ENCODE measurements at regions of chr1 and their contacts with region 1.

Region 1: DNA sequence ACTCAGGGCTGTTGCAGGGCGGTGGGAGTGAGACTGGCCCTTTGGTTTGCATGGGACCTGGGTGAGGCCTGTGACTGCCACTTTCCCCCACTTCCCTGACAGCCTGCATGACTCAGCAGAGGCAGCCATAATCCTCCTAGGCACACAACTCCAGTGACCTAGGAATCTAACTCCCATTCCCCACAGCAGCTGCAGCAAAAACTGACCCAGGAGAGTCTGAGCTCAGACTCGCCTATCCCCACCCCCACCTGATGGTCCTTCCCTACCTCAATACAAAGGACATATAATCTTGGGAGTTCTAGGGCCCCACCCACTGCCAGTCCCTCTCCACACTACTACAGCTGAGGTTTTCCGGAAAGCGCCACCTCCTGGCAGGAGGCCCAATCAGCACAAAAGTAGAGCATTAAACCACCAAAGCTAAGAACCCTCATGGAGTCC is 26.7 kb downstream of the NDC1 start:
- DNase-seq: no peak
- ATAC-seq: no peak
- H3K4me3 ChIP-seq: no peak overlapping the region
- H3K27ac ChIP-seq: no peak overlapping the region
- H3K4me1 ChIP-seq: peaks cover 6% of the 10 kb centered on the region; the same call in 1 of the 2 replicates
- H3K27me3 ChIP-seq: no peaks in the 10 kb centered on the region
- CTCF ChIP-seq: no peak
- POLR2A ChIP-seq: no peak
- RAD21 ChIP-seq: no peak

Region 2: DNA sequence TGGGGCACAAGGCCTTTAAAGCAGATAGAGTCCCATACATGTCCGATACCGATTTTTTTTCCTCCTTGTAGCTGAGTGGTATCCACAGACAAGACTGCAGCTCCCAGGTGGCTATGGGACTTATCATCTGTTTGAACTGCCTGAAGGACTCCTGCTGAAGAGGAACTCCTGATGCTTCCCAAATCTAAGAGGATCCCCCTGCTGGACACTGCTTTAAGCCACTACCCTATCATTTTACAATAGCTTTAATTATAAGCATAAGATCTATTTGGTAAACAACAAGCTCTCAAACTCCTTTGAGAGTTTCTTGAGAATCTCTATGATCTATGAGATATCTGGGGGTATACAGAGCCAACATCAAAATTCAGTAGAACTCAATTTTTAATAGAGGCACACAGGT is 14.9 kb after region 1 on chr1:
- CTCF ChIA-PET with region 1: interaction called, 11 read pairs
- POLR2A ChIA-PET with region 1: no interaction called
- dilution Hi-C with region 1: no loop called
- in situ Hi-C with region 1: no loop called
- intact Hi-C with region 1: no loop called
- DNase-seq: peak; percentile 43
- ATAC-seq: peak; percentile 53
- H3K4me3 ChIP-seq: no peak overlapping the region
- H3K27ac ChIP-seq: no peak overlapping the region
- H3K4me1 ChIP-seq: peaks cover 2% of the 10 kb centered on the region; the same call in 1 of the 2 replicates
- H3K27me3 ChIP-seq: no peaks in the 10 kb centered on the region
- CTCF ChIP-seq: 0 out of 2 replicates have a peak, but pooled peaks have one; percentile 29
- POLR2A ChIP-seq: no peak
- RAD21 ChIP-seq: 0 out of 2 replicates have a peak, but pooled peaks have one; percentile 17